MCF 10A (cell line): ENCODE measurements at regions of chr6 and their contacts with region 1.

Region 1: DNA sequence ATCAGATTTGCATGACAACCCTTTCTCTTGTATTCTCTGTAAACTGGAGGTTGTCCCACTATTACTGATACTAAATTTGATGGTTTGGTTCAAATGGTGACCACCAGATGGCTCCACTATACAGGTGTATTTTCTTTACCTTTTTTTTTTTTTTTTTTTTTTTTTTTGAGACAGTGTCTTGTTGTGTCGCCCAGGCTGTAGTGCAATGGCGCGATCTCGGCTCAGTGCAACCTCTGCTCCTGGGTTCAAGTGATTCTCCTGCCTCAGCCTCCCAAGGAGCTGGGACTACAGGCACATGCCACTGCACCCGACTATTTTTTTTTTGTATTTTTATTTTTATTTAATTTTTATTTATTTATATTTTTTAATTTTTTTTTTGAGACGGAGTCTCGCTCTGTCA is 6.6 kb upstream of the WTAP start:
- DNase-seq: peak; percentile 72
- H3K4me3 Mint-ChIP-seq: no peak overlapping the region
- H3K27ac Mint-ChIP-seq: no peak overlapping the region
- H3K4me1 Mint-ChIP-seq: peaks cover 42% of the 10 kb centered on the region
- H3K27me3 Mint-ChIP-seq: no peaks in the 10 kb centered on the region
- CTCF ChIP-seq: peak; percentile 40

Region 2: DNA sequence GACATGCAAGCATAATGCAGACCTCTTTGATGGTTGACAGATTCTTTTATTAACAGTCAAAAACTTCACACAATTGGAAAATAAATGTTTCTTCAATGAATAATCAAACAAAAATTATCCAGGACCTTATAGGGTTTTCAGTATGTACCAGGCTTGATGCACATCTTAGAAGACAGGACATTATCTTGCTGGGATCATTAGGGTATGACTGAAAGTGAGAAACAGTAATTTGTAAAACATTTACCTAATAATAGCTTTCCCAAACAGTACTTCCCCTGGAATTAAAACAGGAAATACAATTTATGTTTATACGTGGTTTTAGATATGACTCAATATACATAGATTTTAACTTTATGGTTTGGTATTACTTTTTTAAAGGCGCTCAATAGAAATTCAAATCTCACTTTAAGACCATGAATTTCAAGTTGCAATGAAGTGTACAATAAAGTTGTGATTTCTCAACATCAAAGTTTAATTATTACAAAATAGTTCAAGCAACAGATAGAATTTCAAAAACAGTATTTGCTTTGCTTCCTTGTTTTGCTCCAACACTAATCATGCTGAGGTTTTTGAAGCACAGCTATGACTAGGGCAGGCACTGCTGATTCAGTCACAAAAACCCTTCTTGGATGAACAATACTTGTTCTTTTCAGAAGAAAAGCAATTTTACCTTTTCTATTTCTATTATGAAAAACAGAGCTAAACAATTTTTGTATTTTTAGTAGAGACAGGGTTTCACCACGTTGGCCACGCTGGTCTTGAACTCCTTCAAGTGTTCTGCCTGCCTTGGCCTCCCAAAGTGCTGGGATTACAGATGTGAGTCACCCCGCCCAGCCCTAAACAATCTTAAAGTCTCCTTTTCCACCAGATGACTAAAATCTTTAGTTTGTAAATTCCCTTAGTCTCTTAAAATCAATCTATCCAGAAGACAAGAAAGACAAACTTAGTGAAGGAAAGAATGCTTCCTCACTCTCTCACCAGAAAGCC is 41.3 kb before region 1 on chr6:
- CTCF ChIA-PET with region 1: no interaction called
- POLR2A ChIA-PET with region 1: interaction called, 29 read pairs
- intact Hi-C with region 1: no loop called
- DNase-seq: no peak
- H3K4me3 Mint-ChIP-seq: peak overlapping the region; percentile 41
- H3K27ac Mint-ChIP-seq: peak overlapping the region; percentile 27
- H3K4me1 Mint-ChIP-seq: peaks cover 9% of the 10 kb centered on the region
- H3K27me3 Mint-ChIP-seq: no peaks in the 10 kb centered on the region
- CTCF ChIP-seq: no peak

Region 3: GRCh38 chr6:159701411-159701999 is 19.2 kb before region 1 on chr6:
- CTCF ChIA-PET with region 1: interaction called, 27 read pairs
- POLR2A ChIA-PET with region 1: interaction called, 877 read pairs
- intact Hi-C with region 1: no loop called
- DNase-seq: peak; percentile 92
- H3K4me3 Mint-ChIP-seq: peak overlapping the region; percentile 39
- H3K27ac Mint-ChIP-seq: peak overlapping the region; percentile 82
- H3K4me1 Mint-ChIP-seq: peaks cover 14% of the 10 kb centered on the region
- H3K27me3 Mint-ChIP-seq: no peaks in the 10 kb centered on the region
- CTCF ChIP-seq: no peak